Posterior vena cava (tissue), 2 donors: ENCODE measurements at regions of chr18 and their contacts with region 1.

Region 1: GRCh38 chr18:7272311-7273049 is 41.6 kb downstream of the LRRC30 start:
- DNase-seq: peak; percentile 88

Region 2: GRCh38 chr18:7566567-7567473 is 294.3 kb after region 1 on chr18 and contains the start of gene PTPRM:
- intact Hi-C with region 1: loop called (anchors 5 to 10 kb)
- DNase-seq: peak; percentile 97
- total RNA-seq, gene PTPRM: 53.4 to 64.7 TPM

Region 3: GRCh38 chr18:8478166-8478967 is 1205.9 kb after region 1 on chr18:
- intact Hi-C with region 1: loop called in 1 of 2 experiments (anchors 10 kb)
- DNase-seq: peak; percentile 85